ENCODE measurements at regions of chr12 and their contacts with region 1.

Region 1: DNA sequence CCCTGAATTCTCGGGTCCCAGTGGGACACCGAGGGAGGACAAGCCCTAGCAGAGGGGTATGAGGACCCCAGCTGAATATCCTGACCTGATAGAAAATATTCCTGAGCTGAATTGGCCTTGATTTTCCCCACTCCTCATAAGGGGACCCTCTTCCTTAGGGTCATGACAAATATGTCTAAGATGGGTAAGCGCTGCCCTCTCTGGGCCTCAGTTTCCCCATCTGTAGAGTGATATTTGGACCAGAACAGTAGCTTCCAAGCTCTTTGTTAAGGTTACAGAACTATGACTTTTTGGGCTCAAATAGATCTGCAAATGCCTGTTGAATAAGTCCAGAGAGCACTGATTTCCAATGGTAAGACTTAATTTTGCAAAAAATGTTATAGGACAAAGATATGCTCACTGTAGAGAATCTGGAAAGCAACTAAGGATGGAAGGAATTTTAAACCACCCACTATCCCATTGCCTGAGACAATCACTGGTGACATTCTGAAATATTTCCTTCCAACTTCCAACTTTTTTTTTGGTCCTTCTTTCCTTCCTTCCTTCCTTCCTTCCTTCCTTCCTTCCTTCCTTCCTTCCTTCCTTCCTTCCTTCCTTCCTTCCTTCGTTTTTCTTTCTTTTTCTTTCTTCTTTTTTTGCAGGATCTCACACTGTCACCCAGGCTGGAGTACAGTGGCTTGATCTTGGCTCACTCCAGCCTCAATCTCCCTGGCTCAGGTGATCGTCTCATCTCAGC is 32.0 kb downstream of the MYL2 start:
- DNase-seq: no peak
- H3K4me3 ChIP-seq: no peak overlapping the region
- H3K27ac ChIP-seq: no peak overlapping the region
- H3K4me1 ChIP-seq: no peaks in the 10 kb centered on the region
- CTCF ChIP-seq: peak; percentile 49; the same call in 1 of the 2 replicates

Region 2: DNA sequence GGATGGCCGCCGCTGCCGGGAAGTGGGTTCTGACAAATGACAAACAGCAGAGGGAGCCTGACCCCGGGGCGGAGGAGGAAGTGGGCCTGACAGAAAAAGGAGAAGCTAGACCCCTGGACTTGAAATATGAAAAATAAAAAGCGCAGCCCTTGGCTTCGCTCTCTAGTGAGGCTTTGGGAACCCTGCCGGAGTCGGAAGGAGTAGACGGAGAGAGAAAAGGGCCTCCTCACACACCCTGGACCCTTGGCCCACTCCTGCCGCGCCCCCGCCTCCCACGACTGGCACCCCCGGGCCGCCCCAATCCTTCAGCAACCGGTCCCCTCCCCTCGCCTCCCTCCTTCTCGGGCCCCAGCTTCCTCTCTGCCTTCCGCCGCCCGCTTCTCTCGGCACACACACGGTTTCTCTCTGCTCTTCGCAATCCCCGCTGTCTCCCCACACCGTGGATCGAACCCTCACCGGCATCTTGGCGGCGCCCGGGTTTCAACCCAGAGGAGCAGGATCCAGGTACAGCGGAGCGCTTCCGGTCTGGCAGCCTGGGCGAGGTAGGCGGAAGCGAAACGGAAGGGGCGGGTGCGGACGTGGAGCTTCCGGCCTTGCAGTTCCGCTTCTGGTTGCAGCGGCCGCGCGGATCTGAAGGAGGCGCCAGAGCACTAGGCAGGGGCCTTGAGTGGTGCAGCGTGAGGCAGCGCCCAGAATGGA is 438.5 kb before region 1 on chr12 and contains the start of gene ARPC3:
- CTCF ChIA-PET with region 1: no interaction called
- POLR2A ChIA-PET with region 1: no interaction called
- intact Hi-C with region 1: loop called (anchors 10 kb)
- DNase-seq: peak; percentile 98
- H3K4me3 ChIP-seq: peak within 1 kb of the TSS; percentile 91
- H3K27ac ChIP-seq: peak within 1 kb of the TSS; percentile 87
- H3K4me1 ChIP-seq: peaks cover 31% of the 10 kb centered on the region
- CTCF ChIP-seq: peak; percentile 81
- total RNA-seq, gene ARPC3: 250 and 256 TPM in 2 replicates

Region 3: GRCh38 chr12:110531741-110532333 is 356.6 kb before region 1 on chr12:
- CTCF ChIA-PET with region 1: no interaction called
- POLR2A ChIA-PET with region 1: interaction called, 3 read pairs
- intact Hi-C with region 1: loop called (anchors 10 kb)
- DNase-seq: no peak
- H3K4me3 ChIP-seq: no peak overlapping the region
- H3K27ac ChIP-seq: peak overlapping the region; percentile 17
- H3K4me1 ChIP-seq: peaks cover 35% of the 10 kb centered on the region
- CTCF ChIP-seq: no peak

Region 4: GRCh38 chr12:110619534-110619953 is 268.9 kb before region 1 on chr12:
- CTCF ChIA-PET with region 1: no interaction called
- POLR2A ChIA-PET with region 1: interaction called, 3 read pairs
- intact Hi-C with region 1: loop called (anchors 1 kb)
- DNase-seq: peak; percentile 75
- H3K4me3 ChIP-seq: peak overlapping the region; percentile 59
- H3K27ac ChIP-seq: peak overlapping the region; percentile 19
- H3K4me1 ChIP-seq: peaks cover 50% of the 10 kb centered on the region
- CTCF ChIP-seq: peak; percentile 82

Region 5: DNA sequence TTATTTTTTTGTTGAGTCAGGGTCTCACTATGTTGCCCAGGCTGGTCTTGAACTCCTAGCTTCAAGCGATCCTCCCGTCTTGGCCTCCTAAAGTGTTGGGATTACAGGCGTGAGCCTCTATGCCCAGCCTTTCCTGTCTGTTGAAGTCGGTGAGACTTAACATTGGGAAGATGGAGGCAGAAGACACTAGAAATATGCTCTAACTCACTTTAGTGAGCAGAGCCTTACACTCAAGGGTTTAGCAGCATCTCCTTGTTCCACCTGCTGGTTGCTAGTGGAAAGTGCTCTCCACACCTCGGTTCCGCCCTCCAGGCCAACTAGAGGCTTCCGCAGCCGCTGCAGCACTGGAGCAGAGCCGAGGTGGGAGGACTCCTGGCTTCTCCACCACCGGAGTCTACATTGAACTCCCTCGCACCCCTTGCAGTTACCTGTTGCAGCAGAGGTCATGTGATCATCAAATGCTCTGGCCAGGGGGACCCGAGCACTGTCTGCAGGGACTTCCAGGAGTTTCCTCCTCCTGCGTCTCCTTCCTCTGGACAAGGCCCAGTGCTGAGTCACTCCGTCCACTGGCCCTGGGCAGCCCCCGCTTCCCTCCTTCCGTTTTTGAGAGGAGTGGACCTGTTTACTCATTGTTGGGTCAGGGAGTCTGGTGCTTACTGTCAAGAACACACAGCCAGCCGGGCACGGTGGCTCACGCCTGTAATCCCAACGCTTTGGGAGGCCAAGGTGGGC is 190.1 kb before region 1 on chr12:
- CTCF ChIA-PET with region 1: no interaction called
- POLR2A ChIA-PET with region 1: no interaction called
- intact Hi-C with region 1: loop called (anchors 2 kb)
- DNase-seq: peak; percentile 93
- H3K4me3 ChIP-seq: no peak overlapping the region
- H3K27ac ChIP-seq: no peak overlapping the region
- H3K4me1 ChIP-seq: peaks cover 22% of the 10 kb centered on the region
- CTCF ChIP-seq: peak; percentile 85